Motor neuron (in vitro differentiated cells): ENCODE measurements at regions of chr20 and their contacts with region 1.

Region 1: DNA sequence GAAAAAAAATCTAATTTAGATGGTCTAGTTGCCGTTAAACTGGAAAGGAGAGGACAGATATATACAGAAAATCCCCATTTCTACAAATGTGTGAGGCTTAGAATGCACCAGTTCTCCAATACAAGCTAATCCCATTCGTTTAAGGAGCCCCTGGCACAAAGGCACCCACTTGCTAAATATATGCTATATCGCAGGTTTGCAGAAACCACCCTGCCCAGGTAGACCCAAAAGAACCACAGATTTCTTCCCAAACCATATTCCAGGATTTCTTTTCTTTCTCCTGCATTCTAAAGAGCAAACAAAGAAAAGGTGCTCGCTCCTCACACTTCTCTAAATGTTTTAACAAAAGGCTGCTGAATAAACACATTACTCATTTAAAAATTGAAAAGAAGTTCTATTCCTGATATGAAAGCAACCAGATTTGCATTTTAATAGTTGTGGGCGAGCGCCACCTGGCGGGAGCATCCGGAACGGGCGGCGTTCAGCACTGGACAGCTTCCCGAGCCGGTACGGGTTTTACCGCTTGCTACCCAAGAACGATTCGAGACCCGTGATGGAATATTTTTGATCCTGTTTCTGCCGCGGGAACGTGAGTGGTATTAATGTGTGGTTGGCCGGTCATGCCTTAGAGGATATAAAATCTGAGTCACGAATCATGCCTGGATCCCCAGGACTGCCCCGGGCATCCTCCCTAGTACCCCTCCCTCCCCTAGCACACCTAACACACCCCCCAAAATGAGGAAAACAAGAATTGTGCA is 2.1 kb downstream of the PTPRT start:
- ATAC-seq: peak in 7 of 8 experiments; percentile 60 to 78 (median 70)
- H3K4me3 ChIP-seq: peak overlapping the region in 3 of 5 donors; percentile 16 to 69 (median 38)
- H3K27ac ChIP-seq: no peak overlapping the region
- H3K4me1 ChIP-seq: peaks cover 0 to 2% of the 10 kb centered on the region in 2 donors

Region 2: GRCh38 chr20:41738604-41739206 is 1449.0 kb before region 1 on chr20:
- in situ Hi-C with region 1: loop called in 3 of 9 experiments (anchors 25 kb)
- ATAC-seq: peak; percentile 65 to 91 (median 80)
- H3K4me3 ChIP-seq: no peak overlapping the region
- H3K27ac ChIP-seq: no peak overlapping the region
- H3K4me1 ChIP-seq: no peaks in the 10 kb centered on the region

Region 3: DNA sequence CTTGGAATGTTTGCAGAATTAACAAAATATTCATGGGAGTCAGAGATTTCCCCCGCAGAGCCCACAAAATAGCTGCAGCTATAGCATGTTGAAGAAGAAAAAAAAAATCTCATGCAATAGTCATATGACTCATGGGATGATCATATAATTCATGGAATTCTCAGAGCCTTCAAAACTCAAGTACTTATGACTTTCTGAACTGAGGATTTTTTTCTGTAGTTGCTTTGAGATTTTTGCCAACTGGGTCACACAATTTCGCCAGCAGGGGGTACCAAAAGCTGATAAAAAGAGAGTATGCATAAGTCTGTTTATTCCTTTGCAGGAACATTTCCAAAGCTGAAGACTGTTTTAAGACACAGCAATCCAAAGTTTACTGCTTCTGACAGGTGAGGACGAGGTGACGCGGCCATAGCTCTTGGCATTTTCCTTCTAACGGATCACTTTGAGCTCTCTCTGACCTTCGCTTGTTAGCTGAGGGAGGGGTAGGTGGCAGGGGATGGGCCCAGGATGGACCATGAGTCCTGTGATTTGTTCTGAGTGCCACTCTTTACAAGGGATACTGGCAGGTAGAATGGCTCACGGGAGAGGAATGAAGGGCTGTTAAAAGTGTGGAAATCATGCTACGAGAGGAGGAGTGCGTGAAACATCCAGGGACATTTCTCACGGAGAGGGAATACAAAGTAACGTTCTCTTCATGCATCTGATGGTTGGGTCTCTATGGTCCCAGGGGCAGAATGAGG is 983.3 kb before region 1 on chr20:
- in situ Hi-C with region 1: loop called in 1 of 9 experiments (anchors 10 kb)
- ATAC-seq: peak in 3 of 8 experiments; percentile 73 to 89 (median 89)
- H3K4me3 ChIP-seq: no peak overlapping the region
- H3K27ac ChIP-seq: no peak overlapping the region
- H3K4me1 ChIP-seq: no peaks in the 10 kb centered on the region

Region 4: GRCh38 chr20:42945234-42945994 is 242.2 kb before region 1 on chr20:
- in situ Hi-C with region 1: no loop called
- ATAC-seq: no peak
- H3K4me3 ChIP-seq: no peak overlapping the region
- H3K27ac ChIP-seq: no peak overlapping the region
- H3K4me1 ChIP-seq: peaks cover 0 to 2% of the 10 kb centered on the region in 2 donors